K562 (cell line): ENCODE measurements at regions of chr6 and their contacts with region 1.

Region 1: DNA sequence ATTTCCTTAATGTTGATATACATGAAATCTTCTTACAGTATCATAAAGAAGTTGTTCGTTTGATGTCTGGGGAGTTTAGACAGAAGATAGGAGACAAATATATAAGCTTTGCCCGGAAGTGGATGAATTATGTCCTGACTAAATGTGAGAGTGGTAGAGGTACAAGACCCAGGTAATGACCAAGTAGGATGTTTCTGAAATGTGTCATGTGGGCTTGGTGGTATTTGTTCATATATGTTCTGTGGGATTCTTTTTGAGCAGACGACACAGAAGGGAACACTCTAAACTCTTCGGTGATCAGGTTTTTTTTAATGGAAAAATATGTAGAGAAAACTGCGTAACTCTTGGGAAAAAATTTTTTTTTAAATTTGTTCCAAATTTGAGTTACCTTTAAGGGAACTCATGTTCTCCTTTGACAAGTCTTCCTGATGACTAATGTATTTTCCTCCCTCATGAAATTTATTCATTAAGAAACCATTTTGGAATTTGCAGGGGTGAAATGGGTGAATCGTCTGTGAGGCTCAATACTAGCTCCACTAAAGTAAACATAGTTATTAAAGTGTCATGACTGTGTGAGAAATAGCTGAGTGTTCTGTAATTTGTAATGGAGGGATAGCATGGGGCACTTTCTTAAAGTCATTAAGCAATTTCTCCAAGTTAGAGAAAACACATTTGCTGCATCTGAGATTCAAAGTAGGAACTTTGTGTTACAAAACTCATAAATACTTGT is 100.6 kb downstream of the MAP3K4 start:
- DNase-seq: no peak
- ATAC-seq: no peak
- H3K4me3 ChIP-seq: no peak overlapping the region
- H3K27ac ChIP-seq: no peak overlapping the region
- H3K4me1 ChIP-seq: no peaks in the 10 kb centered on the region
- H3K27me3 ChIP-seq: no peaks in the 10 kb centered on the region
- CTCF ChIP-seq: no peak
- EP300 ChIP-seq: no peak
- POLR2A ChIP-seq: no peak
- RAD21 ChIP-seq: no peak

Region 2: DNA sequence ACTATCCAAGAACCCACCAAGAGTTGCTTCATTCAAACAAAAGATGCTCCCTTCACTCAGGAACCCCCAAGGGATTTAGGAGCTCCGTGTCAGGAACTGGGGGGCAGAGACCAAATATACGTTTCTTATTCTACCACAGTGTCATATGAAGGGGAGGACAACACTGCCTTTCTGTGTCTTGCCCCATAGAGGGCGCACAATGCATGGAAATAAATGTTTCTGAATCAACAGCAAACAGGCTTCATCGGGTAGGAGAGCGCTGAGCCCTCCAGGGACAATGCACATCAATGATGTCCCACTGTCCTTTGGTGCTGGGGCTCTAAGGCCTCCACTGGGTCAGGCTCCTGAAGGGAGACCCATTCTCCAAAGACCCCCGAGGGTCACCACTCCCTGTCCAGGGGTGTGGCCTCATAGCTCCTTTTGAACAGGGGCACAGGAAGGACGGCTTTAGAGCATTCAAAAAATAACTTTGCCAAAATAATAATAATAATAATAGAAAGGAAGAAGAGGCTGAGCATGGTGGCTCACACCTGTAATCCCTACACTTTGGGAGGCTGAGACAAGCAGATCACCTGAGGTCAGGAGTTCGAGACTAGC is 359.0 kb before region 1 on chr6:
- CTCF ChIA-PET with region 1: no interaction called
- POLR2A ChIA-PET with region 1: no interaction called
- in situ Hi-C with region 1: no loop called
- intact Hi-C with region 1: loop called (anchors 10 kb)
- DNase-seq: peak; percentile 43 to 79 (median 50)
- ATAC-seq: peak; percentile 94
- H3K4me3 ChIP-seq: no peak overlapping the region
- H3K27ac ChIP-seq: no peak overlapping the region
- H3K4me1 ChIP-seq: no peaks in the 10 kb centered on the region
- H3K27me3 ChIP-seq: no peaks in the 10 kb centered on the region
- CTCF ChIP-seq: peak; percentile 74 to 91 (median 86)
- EP300 ChIP-seq: no peak
- POLR2A ChIP-seq: no peak
- RAD21 ChIP-seq: peak; percentile 58 to 82

Region 3: GRCh38 chr6:161076181-161076677 is 15.9 kb before region 1 on chr6:
- CTCF ChIA-PET with region 1: no interaction called
- POLR2A ChIA-PET with region 1: no interaction called
- in situ Hi-C with region 1: no loop called
- intact Hi-C with region 1: loop called (anchors 2 kb)
- DNase-seq: no peak
- ATAC-seq: no peak
- H3K4me3 ChIP-seq: no peak overlapping the region
- H3K27ac ChIP-seq: no peak overlapping the region
- H3K4me1 ChIP-seq: no peaks in the 10 kb centered on the region; a peak in 1 of 5 replicates
- H3K27me3 ChIP-seq: no peaks in the 10 kb centered on the region
- CTCF ChIP-seq: no peak
- EP300 ChIP-seq: no peak
- POLR2A ChIP-seq: no peak
- RAD21 ChIP-seq: no peak